IMR-90 (cell line): ENCODE measurements at regions of chr21 and their contacts with region 1.

Region 1: GRCh38 chr21:35051287-35051818 is 2.3 kb upstream of the RUNX1 start:
- DNase-seq: peak; percentile 80
- ATAC-seq: peak; percentile 63
- H3K4me3 ChIP-seq: no peak overlapping the region
- H3K27ac ChIP-seq: peak overlapping the region; percentile 42
- H3K4me1 ChIP-seq: peaks cover 29% of the 10 kb centered on the region
- H3K27me3 ChIP-seq: no peaks in the 10 kb centered on the region
- CTCF ChIP-seq: peak; percentile 61
- POLR2A ChIP-seq: no peak
- RAD21 ChIP-seq: peak; percentile 67

Region 2: GRCh38 chr21:34693192-34693810 is 358.1 kb before region 1 on chr21:
- CTCF ChIA-PET with region 1: interaction called, 3 read pairs
- POLR2A ChIA-PET with region 1: no interaction called
- dilution Hi-C with region 1: no loop called
- in situ Hi-C with region 1: no loop called
- intact Hi-C with region 1: loop called (anchors 10 kb)
- DNase-seq: peak; percentile 74
- ATAC-seq: peak; percentile 80
- H3K4me3 ChIP-seq: no peak overlapping the region
- H3K27ac ChIP-seq: no peak overlapping the region
- H3K4me1 ChIP-seq: no peaks in the 10 kb centered on the region
- H3K27me3 ChIP-seq: peaks cover 36% of the 10 kb centered on the region
- CTCF ChIP-seq: peak; percentile 84
- POLR2A ChIP-seq: no peak
- RAD21 ChIP-seq: peak; percentile 89

Region 3: DNA sequence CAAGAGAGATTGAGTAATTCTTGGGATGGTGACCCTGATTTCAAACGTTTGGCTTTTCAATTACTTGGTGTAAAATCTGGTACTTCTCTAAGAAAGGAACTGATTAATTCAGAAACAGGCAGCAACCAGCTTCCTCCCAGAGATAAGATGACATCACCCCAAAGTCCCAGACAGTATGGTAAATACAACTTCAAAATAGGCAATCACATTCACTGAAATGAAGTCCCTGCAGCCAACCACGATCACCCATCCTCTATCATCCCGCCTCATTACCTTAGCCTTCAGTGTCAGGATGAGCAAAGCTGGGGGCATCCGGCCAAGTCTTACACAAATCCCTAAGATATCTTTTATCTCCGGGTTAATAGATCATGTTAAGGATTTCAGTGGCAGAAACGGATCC is 24.2 kb after region 1 on chr21:
- CTCF ChIA-PET with region 1: no interaction called
- POLR2A ChIA-PET with region 1: no interaction called
- dilution Hi-C with region 1: no loop called
- in situ Hi-C with region 1: no loop called
- intact Hi-C with region 1: no loop called
- DNase-seq: peak; percentile 82
- ATAC-seq: peak; percentile 57
- H3K4me3 ChIP-seq: no peak overlapping the region
- H3K27ac ChIP-seq: no peak overlapping the region
- H3K4me1 ChIP-seq: peaks cover 15% of the 10 kb centered on the region
- H3K27me3 ChIP-seq: no peaks in the 10 kb centered on the region
- CTCF ChIP-seq: no peak
- POLR2A ChIP-seq: no peak
- RAD21 ChIP-seq: no peak

Region 4: GRCh38 chr21:35204850-35205541 is 153.6 kb after region 1 on chr21:
- CTCF ChIA-PET with region 1: interaction called, 7 read pairs
- POLR2A ChIA-PET with region 1: no interaction called
- dilution Hi-C with region 1: no loop called
- in situ Hi-C with region 1: no loop called
- intact Hi-C with region 1: loop called (anchors 1 kb)
- DNase-seq: peak; percentile 98
- ATAC-seq: peak; percentile 78
- H3K4me3 ChIP-seq: peak overlapping the region; percentile 25; the same call in 1 of the 2 replicates
- H3K27ac ChIP-seq: peak overlapping the region; percentile 91
- H3K4me1 ChIP-seq: peaks cover 40% of the 10 kb centered on the region
- H3K27me3 ChIP-seq: no peaks in the 10 kb centered on the region
- CTCF ChIP-seq: peak; percentile 44
- POLR2A ChIP-seq: peak; percentile 53; the same call in 1 of the 2 replicates
- RAD21 ChIP-seq: peak; percentile 43

Region 5: GRCh38 chr21:35400233-35400957 is 349.0 kb after region 1 on chr21:
- CTCF ChIA-PET with region 1: interaction called, 3 read pairs
- POLR2A ChIA-PET with region 1: no interaction called
- dilution Hi-C with region 1: no loop called
- in situ Hi-C with region 1: no loop called
- intact Hi-C with region 1: loop called (anchors 2 kb)
- DNase-seq: peak; percentile 67
- ATAC-seq: peak; percentile 53; the same call in 1 of the 2 replicates
- H3K4me3 ChIP-seq: no peak overlapping the region
- H3K27ac ChIP-seq: no peak overlapping the region
- H3K4me1 ChIP-seq: peaks cover 8% of the 10 kb centered on the region
- H3K27me3 ChIP-seq: no peaks in the 10 kb centered on the region
- CTCF ChIP-seq: peak; percentile 61
- POLR2A ChIP-seq: 0 out of 2 replicates have a peak, but pooled peaks have one; percentile 25
- RAD21 ChIP-seq: peak; percentile 78

Region 6: DNA sequence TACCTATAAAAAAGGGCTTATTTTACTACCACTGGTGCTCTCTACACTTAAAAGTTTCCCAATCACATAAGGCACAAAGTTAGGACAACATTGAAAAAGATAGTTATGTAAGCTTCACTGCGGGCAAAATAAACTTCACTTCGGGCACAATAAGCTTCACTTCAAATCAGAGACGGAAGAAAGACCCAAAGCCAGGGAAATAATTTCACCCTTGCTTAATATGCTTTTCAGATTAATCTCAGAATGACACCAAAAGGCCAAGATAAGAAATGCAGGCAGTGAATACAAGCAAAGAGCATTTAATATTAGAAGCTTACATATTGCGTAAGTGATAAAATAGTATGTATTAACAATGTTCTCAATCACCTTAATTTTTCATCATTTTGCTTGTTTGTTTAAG is 564.7 kb after region 1 on chr21:
- CTCF ChIA-PET with region 1: no interaction called
- POLR2A ChIA-PET with region 1: no interaction called
- dilution Hi-C with region 1: no loop called
- in situ Hi-C with region 1: no loop called
- intact Hi-C with region 1: loop called (anchors 10 kb)
- DNase-seq: peak; percentile 70
- ATAC-seq: peak; percentile 66
- H3K4me3 ChIP-seq: no peak overlapping the region
- H3K27ac ChIP-seq: no peak overlapping the region
- H3K4me1 ChIP-seq: peaks cover 9% of the 10 kb centered on the region
- H3K27me3 ChIP-seq: no peaks in the 10 kb centered on the region
- CTCF ChIP-seq: peak; percentile 60
- POLR2A ChIP-seq: no peak
- RAD21 ChIP-seq: peak; percentile 63

Region 7: DNA sequence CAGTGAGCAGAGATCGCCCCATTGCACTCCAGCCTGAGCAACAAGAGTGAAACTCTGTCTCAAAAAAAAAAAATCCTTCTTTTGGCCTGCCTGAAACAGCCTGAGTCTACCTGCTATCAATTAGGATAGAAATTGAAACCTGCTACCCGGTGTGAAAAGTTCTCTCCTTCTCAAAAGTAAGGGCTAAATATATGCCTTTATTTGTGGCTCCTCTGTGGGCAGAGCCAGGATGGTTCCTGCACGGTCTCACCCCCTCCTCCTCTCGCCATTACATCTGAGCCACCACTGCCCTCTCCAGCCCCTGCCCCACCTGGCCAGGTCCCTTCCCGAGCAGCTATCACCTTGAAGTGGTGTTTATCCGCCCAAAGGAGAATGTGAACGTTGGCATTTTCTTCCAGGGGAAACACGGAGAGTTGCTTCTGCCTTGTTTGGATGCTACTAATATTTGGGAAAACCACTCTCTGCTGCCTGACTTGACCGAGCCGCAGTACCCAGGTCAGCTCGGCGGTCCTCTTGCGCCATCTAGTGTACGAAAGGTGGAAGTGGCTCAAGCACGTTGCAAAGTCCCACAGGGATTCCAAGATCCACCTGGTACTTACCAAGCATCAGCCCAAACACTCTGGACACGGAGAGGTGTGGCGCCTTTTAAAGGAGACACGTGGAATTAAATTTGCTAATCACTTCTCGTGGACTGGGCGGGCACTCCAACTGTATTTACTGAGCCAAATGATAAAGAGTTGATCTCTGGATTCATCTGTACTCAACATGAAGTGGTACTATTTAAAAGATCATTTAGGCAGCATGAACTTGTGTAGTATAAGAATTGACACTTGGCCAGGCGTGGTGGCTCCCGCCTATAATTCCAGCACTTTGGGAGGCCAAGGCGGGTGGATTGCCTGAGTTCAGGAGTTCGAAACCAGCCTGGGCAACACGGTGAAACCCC is 977.0 kb after region 1 on chr21:
- CTCF ChIA-PET with region 1: no interaction called
- POLR2A ChIA-PET with region 1: interaction called, 6 read pairs
- dilution Hi-C with region 1: no loop called
- in situ Hi-C with region 1: no loop called
- intact Hi-C with region 1: loop called (anchors 1 kb)
- DNase-seq: peak; percentile 73
- ATAC-seq: peak; percentile 97
- H3K4me3 ChIP-seq: no peak overlapping the region
- H3K27ac ChIP-seq: no peak overlapping the region
- H3K4me1 ChIP-seq: peaks cover 7% of the 10 kb centered on the region
- H3K27me3 ChIP-seq: no peaks in the 10 kb centered on the region
- CTCF ChIP-seq: peak; percentile 97
- POLR2A ChIP-seq: no peak
- RAD21 ChIP-seq: peak; percentile 98